ENCODE measurements at regions of chr1 and their contacts with region 1.

Region 1: GRCh38 chr1:89454845-89455521 is 69.6 kb upstream of the LRRC8B start:
- DNase-seq: no peak
- H3K4me3 ChIP-seq: no peak overlapping the region
- H3K27ac ChIP-seq: peak overlapping the region in 3 of 4 donors; percentile 85 to 90 (median 88)
- H3K4me1 ChIP-seq: peaks cover 6 to 43% (median 7%) of the 10 kb centered on the region in 3 donors
- H3K27me3 ChIP-seq: no peaks in the 10 kb centered on the region
- CTCF ChIP-seq: peak; percentile 19 to 84 (median 76)
- POLR2A ChIP-seq: no peak

Region 2: GRCh38 chr1:89347296-89347695 is 107.7 kb before region 1 on chr1:
- intact Hi-C with region 1: no loop called
- DNase-seq: no peak
- H3K4me3 ChIP-seq: no peak overlapping the region
- H3K27ac ChIP-seq: no peak overlapping the region
- H3K4me1 ChIP-seq: no peaks in the 10 kb centered on the region
- H3K27me3 ChIP-seq: no peaks in the 10 kb centered on the region
- CTCF ChIP-seq: no peak
- POLR2A ChIP-seq: no peak

Region 3: DNA sequence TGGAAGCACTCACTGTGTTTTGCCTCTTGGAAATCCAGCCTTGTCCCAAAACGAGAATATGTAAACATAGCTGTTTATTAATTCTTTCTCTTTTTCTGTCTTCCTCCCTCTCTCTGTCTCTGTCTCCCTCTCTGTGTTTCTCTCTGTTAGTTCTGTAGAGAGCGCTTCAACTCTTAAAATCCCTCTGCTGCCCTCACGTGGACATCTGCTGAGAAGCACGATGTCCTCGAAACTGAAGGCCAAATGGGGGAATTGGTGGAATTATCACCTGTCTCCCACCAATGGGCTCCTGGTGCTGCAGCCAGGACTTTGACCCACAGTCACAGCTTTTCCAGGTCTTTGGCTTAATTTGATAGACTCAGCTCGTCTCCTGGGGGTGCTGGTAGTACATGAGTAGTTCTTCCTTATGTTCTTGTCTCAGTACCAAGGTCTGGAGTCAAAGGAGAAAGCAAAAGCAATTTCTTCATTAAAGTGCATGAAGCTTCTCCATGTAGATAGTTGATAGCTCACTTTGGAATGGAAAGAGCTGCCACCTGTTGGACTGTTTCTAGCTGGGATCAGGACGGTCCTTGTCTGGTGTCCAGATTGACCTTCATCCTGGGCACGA is 96.6 kb before region 1 on chr1:
- intact Hi-C with region 1: loop called (anchors 5 kb)
- DNase-seq: peak; percentile 2
- H3K4me3 ChIP-seq: no peak overlapping the region
- H3K27ac ChIP-seq: no peak overlapping the region
- H3K4me1 ChIP-seq: peaks cover 0 to 37% (median 12%) of the 10 kb centered on the region in 3 donors
- H3K27me3 ChIP-seq: no peaks in the 10 kb centered on the region
- CTCF ChIP-seq: peak; percentile 70 to 87 (median 83)
- POLR2A ChIP-seq: no peak

Measured in esophagus squamous epithelium (tissue), 5 donors.